PC-3 (cell line): ENCODE measurements at regions of chr1 and their contacts with region 1.

Region 1: DNA sequence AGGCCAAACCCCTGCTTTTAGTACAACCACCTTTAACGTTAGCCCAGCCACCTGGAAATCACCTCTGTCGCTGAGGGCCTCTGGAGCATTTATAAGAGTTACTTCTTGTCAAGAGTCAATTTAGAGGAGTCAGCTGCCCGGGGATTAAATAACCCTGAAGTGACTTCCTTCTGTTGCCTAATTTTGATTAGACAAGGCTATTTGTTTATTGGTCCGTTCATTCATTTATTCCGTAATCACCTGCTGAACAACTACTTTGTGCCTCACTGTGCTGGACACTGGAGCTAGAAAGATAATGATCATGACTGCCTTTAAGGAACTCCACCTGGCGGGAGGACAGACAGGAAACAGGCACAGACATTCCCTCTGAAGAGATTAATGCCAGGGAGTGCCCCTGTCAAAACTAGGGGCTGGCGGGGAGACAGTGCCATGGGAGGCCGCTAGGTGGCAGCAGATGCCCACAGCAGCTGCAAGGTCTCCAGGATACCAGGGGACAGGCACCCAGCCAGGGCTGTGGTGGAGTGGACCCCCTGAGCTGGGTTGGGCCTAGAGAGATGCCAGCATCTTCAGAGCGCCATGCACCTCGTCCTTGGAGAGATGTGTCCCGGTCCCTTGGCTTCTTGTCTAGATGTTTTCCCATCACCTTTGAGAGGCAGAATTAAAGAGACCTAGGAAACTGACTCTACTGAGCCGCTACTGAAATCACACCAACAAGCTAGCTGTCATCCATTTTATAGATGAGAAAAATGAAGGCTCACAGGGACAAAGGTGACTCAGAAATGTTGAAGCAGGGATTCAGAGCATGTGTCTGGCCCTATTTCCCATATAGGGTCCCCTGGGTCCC is 3.7 kb downstream of the REN start:
- DNase-seq: peak; percentile 98
- ATAC-seq: peak; percentile 92
- H3K4me3 ChIP-seq: no peak overlapping the region
- H3K27ac ChIP-seq: no peak overlapping the region
- H3K4me1 ChIP-seq: peaks cover 16% of the 10 kb centered on the region
- H3K27me3 ChIP-seq: no peaks in the 10 kb centered on the region
- CTCF ChIP-seq: peak; percentile 100

Region 2: DNA sequence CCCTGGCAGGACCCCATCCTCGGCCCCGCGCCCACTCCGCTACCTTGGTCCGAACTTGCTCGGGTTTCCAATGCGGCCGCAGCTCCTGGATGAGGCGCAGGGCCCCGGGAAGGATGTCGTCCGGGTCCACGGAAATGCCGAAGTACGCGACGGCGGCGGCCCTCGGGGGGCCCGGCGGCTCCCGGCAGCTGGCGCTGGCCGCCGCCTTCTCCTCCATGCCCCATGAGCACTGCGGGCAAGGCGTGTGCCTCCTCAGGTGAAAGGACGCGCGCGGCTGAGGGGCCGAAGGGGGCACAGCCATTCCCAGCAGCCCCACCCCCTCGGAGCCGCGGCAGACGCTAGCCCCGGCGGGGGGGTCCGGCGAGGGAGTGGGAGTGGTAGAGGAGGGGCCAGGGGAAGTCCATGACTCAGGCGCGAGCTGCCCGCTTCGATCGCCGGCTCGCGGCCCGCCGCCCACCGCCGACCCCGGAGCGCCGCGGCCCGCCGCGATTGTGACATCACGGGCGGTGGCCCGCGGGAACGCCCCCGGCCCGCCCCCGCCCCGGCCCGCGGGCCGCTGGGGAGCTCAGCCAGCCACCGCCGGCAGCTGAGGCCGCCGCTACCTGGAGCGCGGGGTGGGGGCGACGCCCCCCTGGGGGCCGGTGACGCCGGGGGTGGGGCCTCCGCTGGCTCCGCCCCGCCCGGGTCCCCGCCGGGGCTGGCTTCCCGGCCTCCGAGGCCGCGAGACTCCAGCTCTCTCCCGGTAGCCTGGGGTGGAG is 10.7 kb before region 1 on chr1 and contains the start of gene ETNK2:
- CTCF ChIA-PET with region 1: interaction called, 11 read pairs
- POLR2A ChIA-PET with region 1: no interaction called
- intact Hi-C with region 1: no loop called
- DNase-seq: peak; percentile 72
- ATAC-seq: peak; percentile 77
- H3K4me3 ChIP-seq: peak within 1 kb of the TSS; percentile 71
- H3K27ac ChIP-seq: no peak within 1 kb of the TSS
- H3K4me1 ChIP-seq: peaks cover 14% of the 10 kb centered on the region; the same call in 1 of the 2 replicates
- H3K27me3 ChIP-seq: no peaks in the 10 kb centered on the region
- CTCF ChIP-seq: no peak
- total RNA-seq, gene ETNK2: 24.5 and 37.1 TPM in 2 replicates

Region 3: DNA sequence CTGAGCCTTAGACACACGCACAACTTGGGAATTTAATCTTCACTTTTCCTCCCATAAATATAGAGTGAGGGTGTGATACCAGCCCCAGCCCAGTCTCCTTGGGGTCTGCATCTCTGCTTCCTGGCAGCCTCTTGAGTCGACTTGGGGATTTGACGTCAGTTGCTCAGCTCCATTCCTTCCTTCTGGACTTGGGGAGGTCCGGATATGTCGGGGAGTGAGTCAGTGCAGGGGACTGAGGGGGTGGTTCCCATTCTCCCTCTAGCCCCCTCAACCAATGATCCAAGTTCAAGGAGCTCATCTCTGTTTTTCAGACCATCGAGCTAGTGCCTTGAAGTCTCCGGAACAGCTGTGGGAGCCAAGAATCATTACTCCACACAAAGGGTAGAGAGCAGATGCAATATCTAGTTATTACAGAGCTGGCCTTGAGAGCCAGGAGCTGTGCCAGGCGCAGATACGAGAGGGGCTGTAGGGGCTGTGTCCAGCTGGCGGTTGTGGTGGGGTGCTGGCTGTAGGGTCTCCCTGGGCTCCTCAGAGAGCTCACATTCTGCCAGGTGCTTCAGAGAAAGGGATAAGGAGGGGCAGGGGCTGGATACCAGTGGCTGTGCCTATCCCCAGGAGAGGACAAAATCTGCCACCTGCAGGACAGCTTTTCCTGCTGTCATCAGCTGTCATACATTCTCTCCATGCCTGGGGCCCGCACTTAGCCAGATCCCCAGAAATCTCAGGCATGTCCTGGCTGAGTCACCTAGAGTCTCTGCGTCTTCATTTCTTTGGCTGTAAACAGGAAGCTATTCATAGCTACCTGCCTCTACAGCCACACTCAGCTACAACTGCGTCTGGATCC is 35.9 kb after region 1 on chr1:
- CTCF ChIA-PET with region 1: interaction called, 70 read pairs
- POLR2A ChIA-PET with region 1: no interaction called
- intact Hi-C with region 1: loop called (anchors 1 kb)
- DNase-seq: peak; percentile 98
- ATAC-seq: peak; percentile 95
- H3K4me3 ChIP-seq: no peak overlapping the region
- H3K27ac ChIP-seq: peak overlapping the region; percentile 73
- H3K4me1 ChIP-seq: peaks cover 32% of the 10 kb centered on the region
- H3K27me3 ChIP-seq: no peaks in the 10 kb centered on the region
- CTCF ChIP-seq: peak; percentile 74

Region 4: GRCh38 chr1:204207136-204207616 is 44.7 kb after region 1 on chr1:
- CTCF ChIA-PET with region 1: interaction called, 28 read pairs
- POLR2A ChIA-PET with region 1: no interaction called
- intact Hi-C with region 1: loop called (anchors 1 kb)
- DNase-seq: peak; percentile 81
- ATAC-seq: peak; percentile 96
- H3K4me3 ChIP-seq: no peak overlapping the region
- H3K27ac ChIP-seq: no peak overlapping the region
- H3K4me1 ChIP-seq: peaks cover 22% of the 10 kb centered on the region
- H3K27me3 ChIP-seq: no peaks in the 10 kb centered on the region
- CTCF ChIP-seq: peak; percentile 99

Region 5: DNA sequence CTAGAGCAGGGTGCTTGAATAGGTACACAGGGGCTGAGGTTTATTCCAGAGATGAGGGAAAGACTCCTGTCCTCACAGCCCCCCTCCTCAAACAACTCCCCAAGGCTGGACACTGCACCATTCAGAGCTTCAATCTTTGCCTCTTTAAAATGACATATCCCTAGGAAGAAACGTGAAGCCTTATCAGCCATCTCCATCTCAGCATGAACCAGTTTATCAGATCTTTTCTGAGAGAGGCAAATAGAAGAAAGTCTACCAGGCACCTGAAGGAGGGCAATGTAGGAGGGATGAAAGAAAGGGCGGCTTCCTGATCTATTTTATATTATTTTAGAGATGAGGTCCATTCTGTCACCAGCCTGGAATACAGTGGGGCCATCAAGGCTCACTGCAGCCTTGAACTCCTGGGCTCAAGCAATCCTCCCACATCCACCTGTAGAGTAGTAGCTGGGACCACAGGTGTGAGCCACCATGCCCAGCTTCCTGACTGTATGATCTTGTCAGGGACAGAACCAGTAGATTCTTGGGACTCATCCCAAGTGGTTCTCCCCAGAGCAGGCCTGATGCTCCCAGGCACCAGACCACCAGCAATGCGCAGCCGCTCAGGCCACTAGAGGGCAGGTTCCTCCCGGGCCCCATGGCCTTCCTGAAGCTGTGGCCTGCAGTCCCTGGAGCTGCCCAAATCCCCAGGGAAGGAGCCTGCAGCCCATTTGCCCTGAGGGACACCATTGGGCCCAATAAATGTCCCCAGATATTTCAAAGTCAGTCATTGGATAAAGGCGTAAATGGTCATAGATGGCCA is 95.7 kb after region 1 on chr1:
- CTCF ChIA-PET with region 1: no interaction called
- POLR2A ChIA-PET with region 1: no interaction called
- intact Hi-C with region 1: loop called (anchors 1 kb)
- DNase-seq: peak; percentile 78
- ATAC-seq: peak; percentile 97
- H3K4me3 ChIP-seq: no peak overlapping the region
- H3K27ac ChIP-seq: no peak overlapping the region
- H3K4me1 ChIP-seq: no peaks in the 10 kb centered on the region
- H3K27me3 ChIP-seq: no peaks in the 10 kb centered on the region
- CTCF ChIP-seq: peak; percentile 96